ENCODE measurements at regions of chr12 and their contacts with region 1.

Region 1: GRCh38 chr12:124013073-124013472 is 40.1 kb downstream of the ZNF664 start:
- DNase-seq: peak; percentile 50

Region 2: DNA sequence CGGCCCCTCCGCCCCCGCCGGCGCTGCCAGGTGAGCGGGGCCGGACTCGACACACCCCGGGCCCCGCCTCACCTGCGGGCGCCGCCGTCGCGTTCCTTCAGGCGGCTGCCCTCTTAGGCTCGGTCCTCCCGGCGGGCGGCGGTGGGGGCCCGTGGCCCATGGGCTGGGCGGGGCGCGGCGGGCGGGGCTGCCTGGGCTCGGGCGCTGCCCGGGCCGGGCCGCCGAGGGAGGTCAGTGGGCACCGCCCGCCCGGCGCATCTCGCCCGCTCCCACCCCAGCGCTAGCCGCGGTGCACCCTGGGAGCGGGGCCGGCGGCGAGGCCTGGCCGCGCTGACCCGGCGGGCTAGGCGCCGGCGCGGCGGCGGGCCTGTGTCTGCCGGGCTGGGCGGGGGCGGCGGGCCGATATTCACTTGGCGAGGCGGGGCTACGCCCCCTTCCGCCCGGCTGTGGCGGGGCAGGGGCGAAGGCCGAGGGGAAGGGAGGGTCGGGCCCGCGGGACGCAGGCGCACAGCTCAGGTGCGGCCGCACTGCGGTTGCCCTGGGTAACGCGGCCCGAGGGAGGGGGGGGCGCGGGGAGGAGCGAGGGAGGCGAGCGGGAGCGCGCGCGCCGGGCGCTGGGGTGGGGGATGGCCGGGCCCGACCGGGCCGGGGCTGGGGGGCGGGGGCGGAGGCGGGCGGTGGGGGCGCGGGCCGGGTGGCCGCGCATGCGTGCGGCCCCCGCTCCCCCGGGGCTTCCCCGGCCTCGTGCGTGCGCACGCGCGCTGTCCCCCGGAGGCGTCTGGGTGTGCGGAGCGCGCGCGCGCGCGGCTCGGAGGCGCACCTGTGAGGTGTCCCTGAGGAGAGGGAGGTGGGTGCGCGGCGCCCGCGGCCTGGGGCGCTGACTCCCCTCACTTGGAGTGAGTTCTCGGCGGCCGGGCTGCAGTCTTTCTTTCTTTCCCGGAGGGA is 40.3 kb before region 1 on chr12 and contains the starts of genes CCDC92 and ZNF664:
- in situ Hi-C with region 1: loop called (anchors 5 kb)
- DNase-seq: peak; percentile 87